ENCODE measurements at regions of chr6 and their contacts with region 1.

Region 1: GRCh38 chr6:21873562-21873961 is 280.0 kb downstream of the SOX4 start:
- DNase-seq: no peak
- H3K4me3 ChIP-seq: no peak overlapping the region
- H3K27ac ChIP-seq: no peak overlapping the region
- H3K4me1 ChIP-seq: no peaks in the 10 kb centered on the region
- CTCF ChIP-seq: no peak

Region 2: DNA sequence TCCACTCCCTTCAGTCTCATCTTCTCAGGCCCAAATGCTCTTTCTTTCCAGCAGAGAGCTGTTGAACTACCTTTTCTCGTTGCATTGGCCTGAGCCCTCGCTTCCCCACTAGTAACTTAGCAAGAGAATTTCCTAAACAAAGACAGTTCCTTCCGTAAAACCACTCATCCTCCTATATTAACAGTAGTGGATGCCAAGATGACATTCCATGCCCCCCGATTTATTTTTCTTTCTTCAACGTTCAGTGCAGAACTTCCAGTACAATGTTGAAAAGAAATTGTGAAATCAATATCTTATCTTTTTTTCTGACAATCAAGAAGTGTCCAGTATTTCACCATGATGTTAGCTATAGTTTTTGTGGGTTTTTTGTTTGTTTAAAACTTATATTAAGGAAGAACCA is 234.2 kb before region 1 on chr6:
- CTCF ChIA-PET with region 1: no interaction called
- POLR2A ChIA-PET with region 1: no interaction called
- intact Hi-C with region 1: no loop called
- DNase-seq: no peak
- H3K4me3 ChIP-seq: no peak overlapping the region
- H3K27ac ChIP-seq: no peak overlapping the region
- H3K4me1 ChIP-seq: no peaks in the 10 kb centered on the region
- CTCF ChIP-seq: no peak

Region 3: DNA sequence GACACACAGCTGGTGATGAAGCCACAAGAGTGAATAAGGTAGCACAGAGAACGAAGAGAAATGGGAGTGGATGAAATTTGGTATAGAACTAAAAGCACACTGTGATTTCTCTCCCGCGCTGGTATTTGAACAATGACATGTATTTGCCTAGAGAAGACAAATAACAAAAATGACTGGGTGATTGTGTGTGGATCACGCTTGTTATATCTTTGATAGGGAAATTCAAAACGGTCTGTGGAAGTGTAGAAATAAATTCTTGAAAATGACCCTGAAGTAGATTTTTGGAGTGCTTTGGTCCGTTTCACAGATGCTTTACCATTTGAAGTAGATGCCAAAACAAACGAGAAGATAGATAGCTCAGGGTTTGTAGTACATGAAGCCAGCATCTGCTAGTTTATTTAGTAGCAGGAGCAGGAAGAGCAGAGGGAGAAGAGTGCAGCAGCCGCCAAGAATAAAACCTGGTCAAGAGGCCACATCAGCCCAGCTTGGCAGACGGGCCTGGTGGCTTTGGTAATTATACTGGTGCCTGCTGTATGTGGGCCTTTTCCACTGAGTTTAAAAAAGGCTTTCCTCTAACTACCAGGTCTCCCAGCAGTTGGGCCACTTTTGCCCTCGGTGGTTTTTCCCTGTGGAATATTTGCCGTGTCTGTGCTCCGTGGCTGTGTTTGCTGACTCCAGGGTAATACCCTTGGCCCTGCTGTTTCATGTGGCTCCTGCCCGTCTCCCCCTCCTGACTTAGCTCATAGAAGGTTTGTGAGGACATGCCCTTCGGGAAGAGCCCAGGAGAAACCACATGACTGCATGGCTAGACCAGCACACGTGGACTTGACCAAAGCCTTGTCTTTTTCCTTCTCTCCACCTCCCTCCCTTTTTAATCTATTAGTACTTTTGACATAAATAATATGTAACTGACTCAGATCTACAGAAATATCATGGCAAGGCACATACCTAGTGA is 13.9 kb after region 1 on chr6:
- CTCF ChIA-PET with region 1: no interaction called
- POLR2A ChIA-PET with region 1: no interaction called
- intact Hi-C with region 1: no loop called
- DNase-seq: no peak
- H3K4me3 ChIP-seq: no peak overlapping the region
- H3K27ac ChIP-seq: no peak overlapping the region
- H3K4me1 ChIP-seq: no peaks in the 10 kb centered on the region
- CTCF ChIP-seq: no peak

Region 4: GRCh38 chr6:21946298-21946783 is 72.8 kb after region 1 on chr6:
- CTCF ChIA-PET with region 1: no interaction called
- POLR2A ChIA-PET with region 1: no interaction called
- intact Hi-C with region 1: no loop called
- DNase-seq: no peak
- H3K4me3 ChIP-seq: no peak overlapping the region
- H3K27ac ChIP-seq: no peak overlapping the region
- H3K4me1 ChIP-seq: no peaks in the 10 kb centered on the region
- CTCF ChIP-seq: no peak

Region 5: GRCh38 chr6:22189946-22190345 is 316.4 kb after region 1 on chr6:
- CTCF ChIA-PET with region 1: no interaction called
- POLR2A ChIA-PET with region 1: no interaction called
- intact Hi-C with region 1: loop called (anchors 5 kb)
- DNase-seq: no peak
- H3K4me3 ChIP-seq: no peak overlapping the region
- H3K27ac ChIP-seq: no peak overlapping the region
- H3K4me1 ChIP-seq: no peaks in the 10 kb centered on the region
- CTCF ChIP-seq: no peak